ENCODE measurements at regions of chr10 and their contacts with region 1.

Region 1: GRCh38 chr10:91251430-91252056 is 31.1 kb downstream of the PCGF5 start:
- DNase-seq: peak; percentile 60
- ATAC-seq: no peak
- H3K4me3 Mint-ChIP-seq: no peak overlapping the region
- H3K27ac Mint-ChIP-seq: no peak overlapping the region
- H3K4me1 Mint-ChIP-seq: peaks cover 4% of the 10 kb centered on the region
- H3K27me3 Mint-ChIP-seq: no peaks in the 10 kb centered on the region

Region 2: DNA sequence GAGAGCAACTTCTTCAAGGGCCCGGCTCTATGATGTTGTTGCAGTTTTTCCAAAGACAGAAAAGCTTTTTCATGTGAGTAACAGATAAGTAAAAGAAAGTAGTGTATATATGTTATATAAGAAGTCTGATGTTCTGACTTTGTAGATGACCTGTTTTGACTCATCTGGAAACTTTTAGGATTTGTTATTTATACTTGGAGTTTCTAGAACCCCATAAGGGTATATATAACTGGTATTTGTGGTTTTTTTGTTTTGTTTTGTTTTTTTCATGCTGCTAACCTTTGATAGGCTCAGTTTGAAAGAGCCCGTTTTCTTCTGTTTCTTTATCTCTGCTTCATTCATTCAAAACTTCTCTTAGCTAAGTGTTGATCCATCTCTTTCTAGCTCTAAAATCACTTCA is 372.5 kb before region 1 on chr10:
- CTCF ChIA-PET with region 1: interaction called, 19 read pairs
- POLR2A ChIA-PET with region 1: interaction called, 7 read pairs
- intact Hi-C with region 1: loop called in 1 of 2 experiments (anchors 1 kb)
- DNase-seq: no peak
- ATAC-seq: peak; percentile 30
- H3K4me3 Mint-ChIP-seq: no peak overlapping the region
- H3K27ac Mint-ChIP-seq: peak overlapping the region; percentile 24
- H3K4me1 Mint-ChIP-seq: peaks cover 11% of the 10 kb centered on the region
- H3K27me3 Mint-ChIP-seq: no peaks in the 10 kb centered on the region

Region 3: GRCh38 chr10:90912174-90912573 is 339.4 kb before region 1 on chr10:
- CTCF ChIA-PET with region 1: interaction called, 76 read pairs
- POLR2A ChIA-PET with region 1: no interaction called
- intact Hi-C with region 1: loop called (anchors 1 kb)
- DNase-seq: no peak
- ATAC-seq: no peak
- H3K4me3 Mint-ChIP-seq: no peak overlapping the region
- H3K27ac Mint-ChIP-seq: no peak overlapping the region
- H3K4me1 Mint-ChIP-seq: peaks cover 2% of the 10 kb centered on the region
- H3K27me3 Mint-ChIP-seq: no peaks in the 10 kb centered on the region

Region 4: DNA sequence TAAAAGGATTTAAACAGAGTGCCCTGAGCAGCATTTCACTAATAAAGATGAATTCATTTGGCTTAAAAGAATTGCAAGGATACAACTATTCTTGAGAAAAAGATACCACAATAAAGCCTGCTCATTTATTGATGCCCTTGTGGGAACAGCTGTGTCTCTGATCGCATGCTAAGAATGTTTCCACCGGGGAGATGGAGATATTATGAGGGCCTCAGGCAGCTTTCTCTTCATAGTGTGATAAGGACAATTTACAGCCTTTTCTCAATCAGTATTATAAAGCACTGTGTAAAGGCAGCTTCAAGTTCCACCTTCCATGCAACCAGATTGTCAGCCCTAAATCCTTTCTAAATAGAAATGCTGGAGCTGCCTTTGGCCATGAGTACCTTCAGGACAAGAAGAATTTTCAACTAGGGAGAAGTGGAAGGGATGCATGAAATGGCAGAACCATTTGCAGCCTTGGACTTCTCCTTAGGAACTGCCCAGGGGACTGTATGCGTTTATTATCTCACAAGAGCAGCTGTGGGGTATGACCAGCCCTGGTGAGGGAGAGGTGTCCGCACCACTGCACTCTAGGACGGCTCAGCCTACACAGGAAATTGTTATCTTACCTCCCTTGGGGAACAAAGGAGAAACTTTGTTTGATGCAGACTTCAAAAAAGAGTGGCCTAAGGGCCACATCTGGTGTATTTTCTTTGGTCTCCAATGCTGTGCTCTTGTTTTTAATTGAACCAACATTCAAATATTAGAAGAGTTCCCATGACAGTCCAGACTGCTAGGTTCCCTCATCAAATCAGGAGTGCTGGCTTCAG is 148.0 kb before region 1 on chr10:
- CTCF ChIA-PET with region 1: interaction called, 10 read pairs
- POLR2A ChIA-PET with region 1: no interaction called
- intact Hi-C with region 1: no loop called
- DNase-seq: no peak
- ATAC-seq: no peak
- H3K4me3 Mint-ChIP-seq: no peak overlapping the region
- H3K27ac Mint-ChIP-seq: no peak overlapping the region
- H3K4me1 Mint-ChIP-seq: no peaks in the 10 kb centered on the region
- H3K27me3 Mint-ChIP-seq: no peaks in the 10 kb centered on the region

Region 5: DNA sequence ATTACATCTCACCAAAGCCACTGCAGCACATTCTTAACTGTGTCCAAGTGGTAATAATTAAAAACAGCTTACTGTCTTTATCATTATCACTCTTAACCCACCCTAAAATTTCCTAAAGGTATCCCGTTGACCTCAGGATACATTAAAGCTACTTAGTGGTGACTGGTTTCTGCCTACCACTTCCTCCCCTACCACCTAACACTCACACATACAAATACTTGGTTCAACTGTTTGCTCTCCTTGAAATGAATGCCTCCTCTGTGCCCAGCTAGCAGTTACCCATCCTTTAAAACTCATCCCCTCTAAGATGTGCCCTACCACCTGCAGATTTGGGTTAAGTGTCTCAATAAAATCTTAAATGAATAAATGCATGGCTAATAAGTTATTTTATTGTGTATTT is 24.0 kb before region 1 on chr10:
- CTCF ChIA-PET with region 1: interaction called, 35 read pairs
- POLR2A ChIA-PET with region 1: no interaction called
- intact Hi-C with region 1: no loop called
- DNase-seq: no peak
- ATAC-seq: peak; percentile 36
- H3K4me3 Mint-ChIP-seq: no peak overlapping the region
- H3K27ac Mint-ChIP-seq: no peak overlapping the region
- H3K4me1 Mint-ChIP-seq: peaks cover 33% of the 10 kb centered on the region
- H3K27me3 Mint-ChIP-seq: no peaks in the 10 kb centered on the region

Region 6: GRCh38 chr10:91389636-91390512 is 138.3 kb after region 1 on chr10:
- CTCF ChIA-PET with region 1: no interaction called
- POLR2A ChIA-PET with region 1: no interaction called
- intact Hi-C with region 1: no loop called
- DNase-seq: no peak
- ATAC-seq: peak; percentile 81
- H3K4me3 Mint-ChIP-seq: no peak overlapping the region
- H3K27ac Mint-ChIP-seq: no peak overlapping the region
- H3K4me1 Mint-ChIP-seq: peaks cover 6% of the 10 kb centered on the region
- H3K27me3 Mint-ChIP-seq: peaks cover 18% of the 10 kb centered on the region